ENCODE measurements at regions of chr1 and their contacts with region 1.

Region 1: DNA sequence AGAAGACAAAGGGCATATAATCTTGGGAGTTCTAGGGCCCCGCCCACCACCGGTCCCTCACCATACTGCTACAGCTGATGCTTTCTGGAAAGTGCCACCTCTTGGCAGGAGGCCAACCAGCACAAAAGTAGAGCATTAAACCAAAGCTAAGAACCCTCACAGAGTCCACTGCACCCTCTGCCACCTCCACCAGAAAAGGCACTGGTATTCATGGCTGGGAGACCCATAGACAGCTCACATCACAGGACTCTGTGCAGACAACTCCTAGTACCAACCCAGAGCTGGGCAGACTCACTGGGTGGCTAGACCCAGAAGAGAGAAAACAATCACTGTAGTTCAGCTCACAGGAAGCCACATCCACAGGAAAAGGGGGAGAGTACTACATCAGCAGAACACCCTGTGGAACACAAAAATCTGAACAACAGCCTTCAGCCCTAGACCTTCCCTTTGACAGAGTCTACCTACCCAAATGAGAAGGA is 10.8 kb downstream of the THEM4 start:
- DNase-seq: no peak
- H3K4me3 ChIP-seq: no peak overlapping the region
- CTCF ChIP-seq: no peak

Region 2: GRCh38 chr1:151909150-151910149 is 10.9 kb after region 1 on chr1 and contains the start of gene THEM4:
- CTCF ChIA-PET with region 1: interaction called, 11 read pairs
- POLR2A ChIA-PET with region 1: interaction called, 4 read pairs
- DNase-seq: peak; percentile 71
- H3K4me3 ChIP-seq: peak within 1 kb of the TSS; percentile 73
- CTCF ChIP-seq: peak; percentile 46

Measured in AG04449 (cell line).